K562 (cell line): ENCODE measurements at regions of chr9 and their contacts with region 1.

Region 1: GRCh38 chr9:4740638-4741364 is at the start of gene AK3:
- DNase-seq: peak; percentile 85 to 92 (median 88)
- ATAC-seq: peak; percentile 93
- H3K4me3 ChIP-seq: peak within 1 kb of the TSS; percentile 89
- H3K27ac ChIP-seq: peak within 1 kb of the TSS; percentile 85
- H3K4me1 ChIP-seq: peaks cover 9 to 23% of the 10 kb centered on the region in 2 experiments; a peak in 4 of 5 replicates
- H3K27me3 ChIP-seq: no peaks in the 10 kb centered on the region
- CTCF ChIP-seq: peak in 2 of 3 experiments; percentile 44 to 69; a peak in 4 of 6 replicates
- EP300 ChIP-seq: no peak
- POLR2A ChIP-seq: peak; percentile 76
- RAD21 ChIP-seq: peak; percentile 29 to 41
- polyA plus RNA-seq, gene AK3: 12.2 to 16.0 TPM

Region 2: GRCh38 chr9:4106760-4107143 is 634.0 kb before region 1 on chr9:
- CTCF ChIA-PET with region 1: no interaction called
- POLR2A ChIA-PET with region 1: no interaction called
- in situ Hi-C with region 1: no loop called
- intact Hi-C with region 1: no loop called
- DNase-seq: no peak
- ATAC-seq: no peak
- H3K4me3 ChIP-seq: no peak overlapping the region
- H3K27ac ChIP-seq: no peak overlapping the region
- H3K4me1 ChIP-seq: no peaks in the 10 kb centered on the region
- H3K27me3 ChIP-seq: no peaks in the 10 kb centered on the region; a peak in 1 of 5 replicates
- CTCF ChIP-seq: no peak
- EP300 ChIP-seq: no peak
- POLR2A ChIP-seq: no peak
- RAD21 ChIP-seq: no peak

Region 3: GRCh38 chr9:4382722-4383317 is 358.0 kb before region 1 on chr9:
- CTCF ChIA-PET with region 1: no interaction called
- POLR2A ChIA-PET with region 1: no interaction called
- in situ Hi-C with region 1: no loop called
- intact Hi-C with region 1: loop called (anchors 10 kb)
- DNase-seq: peak in 1 of 4 experiments; percentile 10
- ATAC-seq: no peak
- H3K4me3 ChIP-seq: no peak overlapping the region
- H3K27ac ChIP-seq: no peak overlapping the region
- H3K4me1 ChIP-seq: no peaks in the 10 kb centered on the region
- H3K27me3 ChIP-seq: no peaks in the 10 kb centered on the region
- CTCF ChIP-seq: peak in 2 of 3 experiments; percentile 30 to 53; a peak in 3 of 6 replicates
- EP300 ChIP-seq: no peak
- POLR2A ChIP-seq: no peak
- RAD21 ChIP-seq: peak in 1 of 2 experiments; percentile 40; a peak in 2 of 4 replicates

Region 4: DNA sequence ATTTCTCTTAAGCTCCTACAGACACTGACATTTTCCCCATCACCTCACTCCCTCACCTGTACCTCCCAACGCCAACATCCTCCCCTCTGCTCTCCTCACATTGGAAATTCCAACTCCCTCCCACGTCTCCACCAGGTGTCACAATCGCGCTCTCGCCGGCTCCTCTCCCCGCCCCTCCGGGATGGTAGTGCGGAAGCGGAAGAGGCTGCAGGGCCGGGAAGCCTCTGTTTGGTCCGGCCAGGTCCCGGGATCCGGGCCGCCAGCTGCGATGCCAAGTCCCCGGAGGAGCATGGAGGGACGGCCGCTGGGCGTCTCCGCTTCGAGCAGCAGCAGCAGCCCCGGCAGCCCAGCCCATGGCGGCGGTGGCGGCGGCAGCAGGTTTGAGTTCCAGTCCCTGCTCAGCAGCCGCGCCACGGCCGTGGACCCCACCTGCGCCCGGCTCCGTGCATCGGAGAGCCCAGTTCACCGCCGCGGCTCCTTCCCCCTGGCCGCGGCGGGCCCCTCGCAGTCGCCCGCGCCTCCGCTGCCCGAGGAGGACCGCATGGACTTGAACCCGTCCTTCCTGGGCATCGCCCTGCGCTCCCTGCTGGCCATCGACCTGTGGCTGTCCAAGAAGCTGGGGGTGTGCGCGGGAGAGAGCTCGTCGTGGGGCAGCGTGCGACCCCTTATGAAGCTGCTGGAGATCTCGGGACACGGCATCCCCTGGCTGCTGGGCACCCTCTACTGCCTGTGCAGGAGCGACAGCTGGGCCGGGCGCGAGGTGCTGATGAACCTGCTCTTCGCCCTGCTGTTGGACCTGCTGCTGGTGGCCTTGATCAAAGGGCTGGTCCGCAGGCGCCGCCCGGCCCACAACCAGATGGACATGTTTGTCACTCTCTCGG is 78.5 kb before region 1 on chr9 and contains the start of gene PLPP6:
- CTCF ChIA-PET with region 1: no interaction called
- POLR2A ChIA-PET with region 1: interaction called, 3 read pairs
- in situ Hi-C with region 1: no loop called
- intact Hi-C with region 1: loop called (anchors 2 kb)
- DNase-seq: peak; percentile 75 to 86 (median 80)
- ATAC-seq: peak; percentile 98
- H3K4me3 ChIP-seq: peak within 1 kb of the TSS; percentile 86
- H3K27ac ChIP-seq: peak within 1 kb of the TSS; percentile 69
- H3K4me1 ChIP-seq: peaks cover 10 to 19% of the 10 kb centered on the region in 2 experiments; a peak in 4 of 5 replicates
- H3K27me3 ChIP-seq: no peaks in the 10 kb centered on the region
- CTCF ChIP-seq: peak; percentile 53 to 75 (median 73)
- EP300 ChIP-seq: no peak
- POLR2A ChIP-seq: peak; percentile 71
- RAD21 ChIP-seq: peak; percentile 41 to 75
- polyA plus RNA-seq, gene PLPP6: 1.9 to 2.0 TPM

Region 5: GRCh38 chr9:4679268-4680172 is 61.3 kb before region 1 on chr9 and contains the start of gene CDC37L1:
- CTCF ChIA-PET with region 1: no interaction called
- POLR2A ChIA-PET with region 1: interaction called, 3 read pairs
- in situ Hi-C with region 1: no loop called
- intact Hi-C with region 1: loop called (anchors 5 kb)
- DNase-seq: peak; percentile 85 to 95 (median 88)
- ATAC-seq: peak; percentile 91
- H3K4me3 ChIP-seq: peak within 1 kb of the TSS; percentile 80
- H3K27ac ChIP-seq: peak within 1 kb of the TSS; percentile 94
- H3K4me1 ChIP-seq: peaks cover 0 to 20% of the 10 kb centered on the region in 2 experiments; a peak in 4 of 5 replicates
- H3K27me3 ChIP-seq: no peaks in the 10 kb centered on the region
- CTCF ChIP-seq: peak; percentile 38 to 72 (median 69); a peak in 5 of 6 replicates
- EP300 ChIP-seq: peak; percentile 27; the same call in 1 of the 2 replicates
- POLR2A ChIP-seq: peak; percentile 91
- RAD21 ChIP-seq: no peak
- polyA plus RNA-seq, gene CDC37L1: 1.5 TPM

Region 6: DNA sequence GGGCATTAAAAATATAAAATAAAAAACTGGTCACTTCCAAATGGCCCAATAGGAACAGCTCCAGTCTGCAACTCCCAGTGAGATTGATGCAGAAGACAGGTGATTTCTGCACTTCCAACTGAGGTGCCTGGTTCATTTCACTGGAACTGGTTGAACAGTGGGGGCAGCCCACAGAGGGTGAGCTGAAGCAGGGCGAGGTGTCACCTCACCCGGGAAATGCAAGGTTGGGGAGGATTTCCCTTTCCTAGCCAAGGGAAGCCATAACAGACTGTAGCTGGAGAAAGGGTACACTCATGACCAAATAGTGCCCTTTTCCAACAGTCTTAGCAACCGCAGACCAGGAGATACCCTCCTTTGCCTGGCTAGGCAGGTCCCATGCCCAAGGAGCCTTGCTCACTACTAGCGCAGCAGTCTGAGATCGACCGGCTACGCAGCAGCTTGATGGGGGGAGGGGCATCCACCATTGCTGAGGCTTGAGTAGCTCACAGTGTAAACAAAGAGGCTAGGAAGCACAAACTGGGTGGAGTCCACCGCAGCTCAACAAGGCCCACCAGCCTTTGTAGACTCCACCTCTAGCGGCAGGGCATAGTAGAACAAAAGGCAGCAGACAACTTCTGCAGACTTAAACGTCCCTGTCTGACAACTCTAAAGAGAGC is 586.2 kb after region 1 on chr9:
- CTCF ChIA-PET with region 1: no interaction called
- POLR2A ChIA-PET with region 1: no interaction called
- in situ Hi-C with region 1: no loop called
- intact Hi-C with region 1: no loop called
- DNase-seq: peak in 1 of 4 experiments; percentile 36
- ATAC-seq: peak; percentile 54
- H3K4me3 ChIP-seq: no peak overlapping the region
- H3K27ac ChIP-seq: no peak overlapping the region
- H3K4me1 ChIP-seq: no peaks in the 10 kb centered on the region
- H3K27me3 ChIP-seq: no peaks in the 10 kb centered on the region
- CTCF ChIP-seq: no peak
- EP300 ChIP-seq: no peak
- POLR2A ChIP-seq: no peak
- RAD21 ChIP-seq: no peak